ENCODE measurements at regions of chr16 and their contacts with region 1.

Region 1: GRCh38 chr16:3003582-3004302 is 9.0 kb upstream of the CLDN9 start:
- DNase-seq: peak; percentile 99

Region 2: DNA sequence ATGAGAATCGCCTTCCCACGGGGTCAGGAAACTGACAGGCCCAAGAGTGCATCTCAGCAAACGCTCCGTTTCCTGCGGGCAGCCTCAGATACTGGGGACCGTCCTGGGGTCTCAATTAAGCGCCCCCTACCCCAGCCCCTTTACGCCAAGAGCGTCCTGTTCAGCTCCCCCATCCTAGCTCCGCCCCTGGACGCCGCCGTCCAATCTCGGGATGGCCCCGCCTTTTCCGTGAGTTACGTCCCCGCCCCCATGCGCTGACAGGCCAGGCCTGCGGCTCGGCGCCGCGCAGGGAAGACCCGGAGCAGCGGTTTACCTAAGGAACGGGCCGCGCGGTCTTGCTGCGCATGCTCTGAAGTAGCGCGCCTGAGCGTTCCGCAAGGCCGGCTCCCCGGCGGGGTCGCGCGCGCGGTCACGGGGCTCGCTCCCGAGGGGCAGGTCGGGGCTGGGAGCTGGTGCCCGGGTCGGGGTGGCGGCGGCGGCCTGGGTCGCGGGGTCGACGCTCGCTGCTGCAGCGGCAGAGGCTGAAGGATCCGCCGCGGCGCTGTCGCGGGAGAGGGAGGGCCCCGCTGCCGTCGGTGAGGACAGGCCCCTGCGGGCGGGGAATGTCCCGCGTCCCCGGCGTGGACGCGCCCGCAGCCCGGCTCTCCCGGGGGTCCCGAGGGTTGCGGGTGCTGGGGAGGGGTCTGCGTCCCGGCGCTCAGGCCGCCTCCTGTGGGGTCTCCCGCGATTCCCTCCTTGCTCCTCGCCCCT is 92.0 kb before region 1 on chr16 and contains the start of gene FLYWCH1:
- CTCF ChIA-PET with region 1: no interaction called
- POLR2A ChIA-PET with region 1: no interaction called
- DNase-seq: peak; percentile 92

Region 3: GRCh38 chr16:2936436-2937011 is 67.2 kb before region 1 on chr16:
- CTCF ChIA-PET with region 1: no interaction called
- POLR2A ChIA-PET with region 1: no interaction called
- DNase-seq: no peak

Region 4: GRCh38 chr16:3017794-3018506 is 14.2 kb after region 1 on chr16 and contains the start of gene CLDN6:
- CTCF ChIA-PET with region 1: interaction called, 10 read pairs
- POLR2A ChIA-PET with region 1: interaction called, 60 read pairs
- DNase-seq: peak; percentile 73

Region 5: DNA sequence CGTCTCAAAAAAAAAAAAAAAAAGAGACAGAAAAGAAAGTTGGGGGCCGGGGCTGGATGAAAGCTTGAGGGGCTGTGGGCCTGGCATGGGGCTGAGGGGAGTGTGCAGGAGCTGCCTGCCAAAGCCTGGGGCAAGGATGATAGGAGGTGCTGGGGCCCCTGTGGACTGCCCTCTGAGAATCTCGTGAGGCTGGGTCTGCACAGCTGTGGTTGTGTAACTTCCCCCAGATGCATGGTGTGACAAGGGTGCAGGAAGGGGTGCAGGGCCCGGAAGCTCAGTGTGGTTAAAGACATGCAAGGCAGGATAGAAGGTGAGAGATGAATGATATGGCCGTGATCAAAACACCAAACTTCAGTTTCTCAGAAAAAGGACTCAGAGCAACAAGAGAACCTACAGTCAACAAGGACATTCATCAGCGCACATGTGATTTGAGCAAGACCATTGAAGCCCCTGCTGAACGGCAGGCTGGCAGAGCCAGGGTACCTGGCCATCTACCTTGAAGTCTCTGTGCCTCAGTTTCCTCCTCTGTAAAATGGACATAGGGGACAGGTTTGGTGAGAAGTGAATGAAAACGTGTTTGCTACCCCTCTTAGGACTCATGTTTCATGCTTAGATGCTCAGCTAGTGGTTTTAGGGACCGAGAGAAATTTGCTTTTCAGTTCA is 71.2 kb after region 1 on chr16:
- CTCF ChIA-PET with region 1: no interaction called
- POLR2A ChIA-PET with region 1: no interaction called
- DNase-seq: no peak

Measured in HEK293T (cell line).